ENCODE measurements at regions of chrX and their contacts with region 1.

Region 1: GRCh38 chrX:129726307-129727111 is 12.3 kb upstream of the XPNPEP2 start:
- DNase-seq: peak in 1 of 2 experiments; percentile 74
- H3K4me3 ChIP-seq: no peak overlapping the region
- H3K27ac ChIP-seq: no peak overlapping the region
- H3K4me1 ChIP-seq: 0 out of 2 replicates have a peak, but pooled peaks cover 4% of the 10 kb centered on the region
- H3K27me3 ChIP-seq: no peaks in the 10 kb centered on the region
- CTCF ChIP-seq: peak; percentile 88

Region 2: GRCh38 chrX:129622757-129623341 is 103.7 kb before region 1 on chrX:
- CTCF ChIA-PET with region 1: no interaction called
- POLR2A ChIA-PET with region 1: no interaction called
- intact Hi-C with region 1: no loop called
- DNase-seq: peak; percentile 56 to 79
- H3K4me3 ChIP-seq: no peak overlapping the region
- H3K27ac ChIP-seq: no peak overlapping the region
- H3K4me1 ChIP-seq: peaks cover 14% of the 10 kb centered on the region
- H3K27me3 ChIP-seq: no peaks in the 10 kb centered on the region
- CTCF ChIP-seq: no peak

Region 3: DNA sequence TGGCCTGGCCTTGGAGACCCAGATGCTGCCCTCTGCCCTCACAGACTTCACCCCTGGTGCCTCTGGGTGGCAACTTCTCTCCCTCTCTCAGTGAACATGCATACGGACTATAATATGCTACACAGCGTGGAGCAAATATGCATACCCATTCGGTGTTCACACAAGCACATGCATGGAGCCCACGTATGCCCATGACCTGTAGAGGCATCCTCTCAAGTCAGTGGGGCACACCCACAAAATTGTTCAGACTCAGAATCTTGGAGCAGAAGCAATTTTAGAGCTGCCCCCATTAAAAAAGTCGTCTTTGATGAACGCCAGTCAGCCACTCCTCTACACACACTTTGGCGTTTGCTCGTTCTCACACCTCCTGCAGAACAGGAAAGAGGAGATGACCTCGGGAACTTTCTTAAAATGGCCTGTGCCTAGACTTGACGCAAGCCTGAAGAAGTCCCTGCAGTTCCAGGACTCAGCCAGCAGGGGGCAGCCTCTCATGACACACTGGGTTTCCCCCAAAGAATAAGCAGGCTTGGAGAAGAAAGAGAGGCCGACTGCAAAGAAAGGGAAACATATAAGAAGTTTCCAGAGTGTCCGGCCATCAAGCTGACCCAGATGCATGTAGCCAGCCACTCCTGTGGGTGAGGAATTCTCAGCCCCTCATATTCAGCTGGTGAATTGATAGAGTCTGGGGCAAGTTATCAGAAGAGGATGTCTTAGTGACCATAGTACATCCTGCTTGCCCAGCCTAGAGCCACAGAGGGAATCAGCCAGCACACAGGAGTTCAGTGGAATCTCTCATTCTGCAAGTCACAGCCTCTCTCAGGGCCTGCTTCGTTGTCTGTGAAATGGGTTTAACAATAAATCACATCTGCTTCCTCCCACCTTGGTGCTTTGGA is 89.0 kb before region 1 on chrX:
- CTCF ChIA-PET with region 1: interaction called, 4 read pairs
- POLR2A ChIA-PET with region 1: no interaction called
- intact Hi-C with region 1: loop called (anchors 1 kb)
- DNase-seq: peak; percentile 41 to 66
- H3K4me3 ChIP-seq: no peak overlapping the region
- H3K27ac ChIP-seq: no peak overlapping the region
- H3K4me1 ChIP-seq: no peaks in the 10 kb centered on the region
- H3K27me3 ChIP-seq: no peaks in the 10 kb centered on the region
- CTCF ChIP-seq: peak; percentile 99

Region 4: DNA sequence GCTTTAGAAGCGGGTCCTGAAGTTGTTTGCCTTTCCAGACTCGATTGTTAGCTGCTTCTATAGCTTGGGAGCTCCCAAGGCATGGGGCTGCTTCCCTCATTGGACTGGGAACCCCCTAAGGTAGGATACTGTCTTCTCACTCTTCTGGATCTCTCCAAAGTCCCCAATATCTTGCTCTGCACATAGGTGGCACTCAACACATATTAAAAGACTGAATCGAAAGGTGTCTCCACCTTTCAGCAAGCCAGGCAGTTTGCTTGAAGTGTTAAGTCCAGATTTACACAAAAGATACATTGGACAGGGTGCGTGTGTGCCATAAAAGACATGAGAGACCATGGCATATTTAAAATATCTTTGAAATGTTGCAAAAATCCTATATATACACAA is 70.7 kb before region 1 on chrX:
- CTCF ChIA-PET with region 1: interaction called, 7 read pairs
- POLR2A ChIA-PET with region 1: no interaction called
- intact Hi-C with region 1: loop called (anchors 1 kb)
- DNase-seq: no peak
- H3K4me3 ChIP-seq: no peak overlapping the region
- H3K27ac ChIP-seq: no peak overlapping the region
- H3K4me1 ChIP-seq: peaks cover 13% of the 10 kb centered on the region
- H3K27me3 ChIP-seq: peaks cover 41% of the 10 kb centered on the region
- CTCF ChIP-seq: peak; percentile 59

Region 5: DNA sequence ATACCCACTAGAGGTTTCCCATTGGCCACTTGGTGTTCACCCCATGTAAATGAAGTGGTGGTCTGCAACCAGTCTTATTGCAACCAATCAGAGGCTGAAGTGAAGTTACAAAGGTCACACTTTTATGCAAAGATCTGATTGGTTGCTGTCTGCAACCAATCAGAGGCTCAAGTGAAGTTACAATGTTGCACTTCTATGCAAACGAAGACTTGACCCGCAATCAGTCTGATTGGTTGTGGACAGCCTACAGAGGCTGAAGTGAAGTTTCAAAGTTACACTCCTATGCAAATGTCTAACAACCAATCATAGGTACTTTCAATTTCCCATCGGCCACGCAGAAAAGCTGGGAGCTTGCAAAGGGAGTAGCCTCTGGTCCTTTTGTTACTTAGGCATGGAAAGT is 10.0 kb before region 1 on chrX:
- CTCF ChIA-PET with region 1: no interaction called
- POLR2A ChIA-PET with region 1: no interaction called
- intact Hi-C with region 1: no loop called
- DNase-seq: no peak
- H3K4me3 ChIP-seq: no peak overlapping the region
- H3K27ac ChIP-seq: no peak overlapping the region
- H3K4me1 ChIP-seq: peaks cover 5% of the 10 kb centered on the region; the same call in 1 of the 2 replicates
- H3K27me3 ChIP-seq: no peaks in the 10 kb centered on the region; the same call in 1 of the 2 replicates
- CTCF ChIP-seq: no peak

Region 6: DNA sequence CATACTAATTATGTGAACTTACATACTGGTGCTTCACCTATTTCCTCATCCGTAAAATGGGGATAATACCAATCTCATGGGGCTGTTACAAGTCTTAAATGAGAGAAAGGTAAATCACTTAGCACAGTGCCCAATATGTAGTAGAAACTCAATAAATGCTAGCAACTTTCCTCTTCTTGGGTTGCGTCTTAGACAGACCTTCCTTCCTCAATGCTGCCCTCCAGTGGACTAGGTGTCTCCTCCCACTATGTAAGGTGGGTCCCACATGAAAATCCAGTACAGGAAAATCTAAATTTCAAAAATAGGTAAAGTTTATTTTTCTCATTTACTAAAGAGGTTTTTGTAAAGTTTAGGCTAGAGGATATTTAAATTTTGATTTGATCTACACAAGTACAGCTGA is 96.6 kb after region 1 on chrX:
- CTCF ChIA-PET with region 1: no interaction called
- POLR2A ChIA-PET with region 1: no interaction called
- intact Hi-C with region 1: loop called (anchors 2 kb)
- DNase-seq: peak in 1 of 2 experiments; percentile 18
- H3K4me3 ChIP-seq: no peak overlapping the region
- H3K27ac ChIP-seq: no peak overlapping the region
- H3K4me1 ChIP-seq: no peaks in the 10 kb centered on the region
- H3K27me3 ChIP-seq: no peaks in the 10 kb centered on the region
- CTCF ChIP-seq: peak; percentile 68

Region 7: DNA sequence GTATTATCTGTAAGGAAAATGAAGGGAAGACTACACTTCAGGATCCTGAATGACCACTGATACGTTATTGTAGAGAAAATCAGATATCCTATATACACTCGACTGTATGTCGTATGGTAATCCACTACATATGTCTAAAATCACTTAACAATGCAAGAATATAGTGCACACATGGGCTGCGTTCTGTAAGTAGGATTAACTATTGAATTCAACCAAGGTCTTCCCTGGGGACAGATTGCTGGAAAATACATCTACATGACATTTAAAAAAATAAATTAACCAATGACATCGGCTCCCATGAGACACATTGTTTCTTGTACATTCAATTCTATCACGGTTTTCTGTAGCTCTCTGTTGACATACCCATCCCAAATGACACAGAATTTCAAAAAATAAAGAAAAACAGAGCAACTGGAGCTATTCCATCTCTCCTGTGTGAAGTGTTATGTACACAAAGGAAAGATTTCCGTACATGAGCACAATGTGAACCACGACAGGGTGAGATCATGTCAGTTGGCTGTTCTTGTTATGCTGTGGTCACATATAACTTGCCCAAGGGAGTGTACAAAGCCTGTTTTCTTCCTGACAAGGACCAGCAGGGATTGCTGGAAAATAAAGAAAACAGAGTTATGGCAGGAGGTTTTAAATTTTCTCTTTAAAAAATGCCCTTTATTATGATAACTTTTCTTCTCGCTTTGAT is 1170.4 kb after region 1 on chrX:
- CTCF ChIA-PET with region 1: interaction called, 11 read pairs
- POLR2A ChIA-PET with region 1: no interaction called
- intact Hi-C with region 1: no loop called
- DNase-seq: no peak
- H3K4me3 ChIP-seq: no peak overlapping the region
- H3K27ac ChIP-seq: no peak overlapping the region
- H3K4me1 ChIP-seq: peaks cover 8% of the 10 kb centered on the region; the same call in 1 of the 2 replicates
- H3K27me3 ChIP-seq: no peaks in the 10 kb centered on the region
- CTCF ChIP-seq: no peak